ENCODE measurements at regions of chr7 and their contacts with region 1.

Region 1: DNA sequence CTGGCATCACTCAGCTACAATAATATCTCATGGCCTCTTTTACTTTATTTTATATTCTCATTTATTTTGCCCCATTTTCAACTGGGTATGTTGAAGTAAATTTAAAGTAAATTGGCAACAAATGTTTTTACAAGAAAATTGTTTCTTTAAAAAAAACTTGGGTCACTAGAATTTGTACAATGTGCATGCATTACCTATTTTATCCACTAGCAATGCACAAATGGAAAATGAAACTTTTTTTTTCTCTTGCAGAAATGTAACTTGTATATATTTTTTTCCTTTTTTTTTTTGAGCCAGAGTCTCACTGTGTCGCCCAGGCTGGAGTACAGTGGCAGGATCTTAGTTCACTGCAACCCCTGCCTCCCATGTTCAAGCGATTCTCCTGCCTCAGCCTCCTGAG is 10.3 kb upstream of the H2AZ2 start:
- DNase-seq: no peak

Region 2: GRCh38 chr7:44921607-44922359 is 63.6 kb after region 1 on chr7:
- intact Hi-C with region 1: loop called (anchors 1 kb)
- DNase-seq: peak; percentile 77 to 98 (median 94)

Region 3: GRCh38 chr7:44986218-44987053 is 128.3 kb after region 1 on chr7:
- intact Hi-C with region 1: loop called (anchors 10 kb)
- DNase-seq: peak; percentile 80 to 99 (median 92)

Measured in posterior cingulate gyrus (tissue), 11 donors.